Activated CD4-positive, alpha-beta memory T cell treated with anti-CD3 and anti-CD28 coated beads, Interleukin-2, amount 10 ng/mL, durations not matched to agents 7 days and 5 days (primary cell): ENCODE measurements at regions of chr17 and their contacts with region 1.

Region 1: DNA sequence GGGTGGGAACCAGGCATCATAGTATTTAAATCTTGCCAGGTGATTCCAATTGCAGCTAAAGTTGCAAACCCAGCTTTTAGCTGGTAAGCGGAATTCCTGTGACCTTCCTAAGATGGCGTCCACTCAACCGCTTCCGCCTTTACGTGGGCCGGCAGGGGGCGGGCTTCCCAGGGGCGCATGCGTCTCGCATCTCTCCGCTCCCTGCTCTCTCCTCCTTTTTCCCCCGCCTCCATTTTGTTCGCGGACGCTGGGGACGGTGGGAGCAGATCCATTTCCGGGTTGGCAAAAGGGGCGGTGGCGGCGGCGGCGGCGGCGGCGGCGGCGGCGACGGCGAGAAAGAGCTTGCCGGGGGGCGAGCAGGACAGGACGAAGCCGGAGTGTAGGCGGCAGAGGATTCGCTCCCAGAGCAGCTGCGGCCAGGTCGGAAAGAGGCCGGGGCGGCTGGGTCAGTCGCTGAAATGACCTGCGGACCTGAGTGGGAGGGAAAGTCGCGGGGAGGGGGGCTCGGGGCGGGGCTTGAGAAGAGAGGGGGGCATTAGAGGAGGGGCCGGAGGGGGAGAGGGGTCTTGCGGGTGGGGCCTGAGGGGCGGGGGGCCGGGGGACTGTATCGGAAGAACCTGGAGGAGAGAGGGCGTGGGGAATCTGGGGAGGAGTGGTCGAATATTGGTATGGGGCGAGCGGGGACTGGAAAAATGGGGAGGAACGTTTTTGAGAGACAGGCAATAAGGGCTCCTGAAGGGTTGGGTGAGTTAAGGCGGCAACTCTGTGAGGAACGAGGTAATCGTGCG is at the start of gene WIPF2:
- DNase-seq: peak; percentile 97
- H3K4me3 Mint-ChIP-seq: peak within 1 kb of the TSS; percentile 90
- H3K27ac Mint-ChIP-seq: peak within 1 kb of the TSS; percentile 100
- H3K4me1 Mint-ChIP-seq: peaks cover 32% of the 10 kb centered on the region
- H3K27me3 Mint-ChIP-seq: no peaks in the 10 kb centered on the region
- total RNA-seq, gene WIPF2: 26.0 TPM

Region 2: GRCh38 chr17:38729886-38730525 is 1489.3 kb before region 1 on chr17 and contains the start of gene CISD3:
- CTCF ChIA-PET with region 1: no interaction called
- POLR2A ChIA-PET with region 1: no interaction called
- DNase-seq: peak; percentile 90
- H3K4me3 Mint-ChIP-seq: peak within 1 kb of the TSS; percentile 99
- H3K27ac Mint-ChIP-seq: peak within 1 kb of the TSS; percentile 100
- H3K4me1 Mint-ChIP-seq: peaks cover 78% of the 10 kb centered on the region
- H3K27me3 Mint-ChIP-seq: no peaks in the 10 kb centered on the region
- total RNA-seq, gene CISD3: 42.8 to 48.6 TPM

Region 3: DNA sequence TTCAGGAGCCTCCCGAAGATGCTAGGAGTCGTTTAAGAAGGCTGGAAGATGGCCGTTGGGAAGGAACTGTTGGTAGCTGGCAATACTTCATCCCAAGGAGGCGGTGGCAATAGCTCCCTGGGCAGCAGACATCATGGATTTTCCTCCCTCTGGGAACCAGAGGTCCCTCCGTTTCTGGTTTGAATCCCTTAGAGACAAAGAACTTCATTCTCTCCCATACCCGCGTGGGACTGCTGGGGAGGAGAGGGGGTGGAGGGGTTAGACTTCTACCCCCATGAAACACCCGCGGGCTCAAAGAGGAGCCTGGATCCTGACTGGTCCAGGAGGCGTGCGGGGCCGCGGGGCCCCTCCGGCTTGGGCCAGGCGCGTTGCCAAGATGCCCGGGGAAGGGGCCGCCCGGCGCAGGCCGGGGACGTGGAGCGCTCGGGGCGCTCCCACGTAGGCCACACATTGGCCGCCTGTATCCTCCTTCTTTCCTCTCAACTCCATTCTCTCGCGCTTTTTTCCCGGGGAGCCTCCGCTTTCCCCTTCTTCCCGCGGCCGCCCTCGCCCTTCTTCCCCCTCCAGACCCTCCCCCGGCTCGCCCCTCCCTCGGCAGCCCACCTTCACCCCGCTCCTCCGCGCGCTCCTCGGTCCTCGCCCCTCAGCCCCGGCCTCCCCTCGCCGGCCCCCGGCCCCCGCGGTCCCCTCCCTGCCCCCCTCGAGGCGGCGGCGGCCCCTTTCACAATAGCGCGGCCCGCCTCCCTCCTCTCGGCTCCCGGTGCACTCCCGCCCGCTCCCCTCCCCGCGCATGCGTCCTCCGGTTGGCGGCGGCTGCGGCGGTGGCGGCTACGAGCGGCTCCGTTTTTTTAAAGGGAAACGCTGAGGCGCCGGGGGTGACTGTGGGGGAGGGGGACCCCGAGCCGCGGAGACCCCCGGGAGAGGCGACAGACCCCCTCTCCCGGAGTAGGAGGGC is 97.8 kb before region 1 on chr17 and contains the start of gene MSL1:
- CTCF ChIA-PET with region 1: interaction called, 3 read pairs
- POLR2A ChIA-PET with region 1: interaction called, 13 read pairs
- DNase-seq: peak; percentile 86
- H3K4me3 Mint-ChIP-seq: peak within 1 kb of the TSS; percentile 78
- H3K27ac Mint-ChIP-seq: peak within 1 kb of the TSS; percentile 74
- H3K4me1 Mint-ChIP-seq: peaks cover 39% of the 10 kb centered on the region
- H3K27me3 Mint-ChIP-seq: no peaks in the 10 kb centered on the region
- total RNA-seq, gene MSL1: 102 to 103 TPM

Region 4: GRCh38 chr17:40203131-40203530 is 16.1 kb before region 1 on chr17:
- CTCF ChIA-PET with region 1: interaction called, 51 read pairs
- POLR2A ChIA-PET with region 1: interaction called, 8 read pairs
- DNase-seq: no peak
- H3K4me3 Mint-ChIP-seq: no peak overlapping the region
- H3K27ac Mint-ChIP-seq: no peak overlapping the region
- H3K4me1 Mint-ChIP-seq: peaks cover 5% of the 10 kb centered on the region
- H3K27me3 Mint-ChIP-seq: peaks cover 11% of the 10 kb centered on the region